Breast epithelium (tissue), 4 donors: ENCODE measurements at regions of chr1 and their contacts with region 1.

Region 1: DNA sequence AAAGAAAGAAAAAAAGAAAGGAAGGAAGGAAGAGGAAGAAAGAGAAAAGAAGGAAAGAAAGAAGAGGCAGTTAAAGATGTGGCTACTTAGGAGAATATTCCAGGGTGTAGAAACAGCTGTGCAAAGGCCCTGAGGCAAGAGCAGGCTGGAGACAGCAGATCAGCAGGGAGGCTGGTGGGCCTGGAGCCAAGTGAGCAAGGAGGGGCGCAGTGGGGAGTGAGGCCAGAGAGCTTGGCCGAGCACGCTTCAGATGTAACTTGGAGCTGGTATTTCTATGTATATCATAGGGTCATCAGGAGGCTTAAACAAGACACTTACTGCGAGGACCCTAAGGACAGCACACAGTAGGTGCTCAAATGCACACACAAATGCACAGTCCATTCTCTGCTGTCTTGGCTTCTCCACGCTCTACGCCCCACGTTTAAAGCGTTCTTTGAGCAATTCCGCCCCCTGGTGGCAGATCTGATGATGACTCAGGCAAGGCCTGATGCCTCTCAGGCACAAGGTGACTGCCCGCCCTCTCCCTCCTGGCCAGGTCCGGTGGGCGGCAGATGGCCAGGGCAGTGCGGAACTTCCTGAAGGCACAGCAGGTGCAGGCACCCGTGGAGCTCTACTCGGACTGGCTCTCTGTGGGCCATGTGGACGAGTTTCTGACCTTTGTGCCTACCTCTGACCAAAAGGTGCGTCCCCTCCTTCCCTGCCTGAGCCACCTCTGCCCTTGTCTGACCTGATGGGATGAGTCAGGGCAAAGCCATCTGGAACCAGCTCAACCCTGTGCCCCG is 11.9 kb upstream of the PADI3 start:
- DNase-seq: peak; percentile 72 to 88
- H3K4me3 ChIP-seq: no peak overlapping the region
- H3K27ac ChIP-seq: no peak overlapping the region
- H3K4me1 ChIP-seq: no peaks in the 10 kb centered on the region
- H3K27me3 ChIP-seq: no peaks in the 10 kb centered on the region
- CTCF ChIP-seq: peak; percentile 76 to 95 (median 94)
- POLR2A ChIP-seq: no peak

Region 2: GRCh38 chr1:17053685-17054410 is 183.1 kb before region 1 on chr1 and contains the start of gene SDHB:
- intact Hi-C with region 1: loop called (anchors 10 kb)
- DNase-seq: peak; percentile 98 to 99
- H3K4me3 ChIP-seq: peak within 1 kb of the TSS; percentile 74 to 86 (median 84)
- H3K27ac ChIP-seq: peak within 1 kb of the TSS; percentile 91 to 94
- H3K4me1 ChIP-seq: peaks cover 4 to 11% of the 10 kb centered on the region in 2 donors
- H3K27me3 ChIP-seq: no peaks in the 10 kb centered on the region
- CTCF ChIP-seq: no peak
- POLR2A ChIP-seq: peak; percentile 91
- total RNA-seq, gene SDHB: 80.6 to 106 (median 97.7) TPM

Region 3: DNA sequence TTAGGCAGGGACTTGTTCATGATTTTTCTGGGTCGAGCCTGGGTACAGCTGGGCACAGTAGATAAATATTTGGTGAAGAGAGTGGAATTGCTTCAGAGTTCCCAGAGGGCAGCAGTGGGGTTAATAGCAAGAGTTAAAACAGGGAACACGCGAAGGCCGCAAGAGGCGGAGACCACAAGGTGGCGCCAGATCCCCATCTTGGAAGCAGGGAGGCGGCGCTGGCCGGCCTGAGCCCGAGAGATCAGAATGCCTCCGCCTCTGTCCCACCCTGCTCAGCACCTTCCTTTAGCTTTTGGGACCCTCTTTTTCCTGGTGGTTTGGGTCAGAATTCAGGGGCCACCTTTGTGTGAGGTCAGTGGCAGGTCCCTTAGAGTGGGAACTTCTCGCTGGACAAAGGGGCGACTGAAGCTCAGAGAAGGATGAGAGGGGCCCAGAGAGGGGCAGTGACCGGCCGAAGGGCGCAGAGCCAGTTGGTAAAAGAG is 111.2 kb before region 1 on chr1:
- intact Hi-C with region 1: loop called (anchors 10 kb)
- DNase-seq: peak; percentile 74 to 89
- H3K4me3 ChIP-seq: no peak overlapping the region
- H3K27ac ChIP-seq: no peak overlapping the region
- H3K4me1 ChIP-seq: no peaks in the 10 kb centered on the region
- H3K27me3 ChIP-seq: no peaks in the 10 kb centered on the region
- CTCF ChIP-seq: peak; percentile 82 to 95 (median 90)
- POLR2A ChIP-seq: no peak